ENCODE measurements at regions of chr9 and their contacts with region 1.

Region 1: GRCh38 chr9:96217754-96218693 is 84.0 kb downstream of the HSD17B3 start:
- DNase-seq: peak; percentile 59 to 82
- ATAC-seq: peak; percentile 89 to 95 (median 92)
- H3K4me3 ChIP-seq: peak overlapping the region in 9 of 10 donors; percentile 12 to 48 (median 40)
- H3K27ac ChIP-seq: peak overlapping the region in 9 of 10 donors; percentile 13 to 76 (median 37)
- H3K4me1 ChIP-seq: peaks cover 5 to 34% (median 20%) of the 10 kb centered on the region in 9 donors
- H3K27me3 ChIP-seq: peaks cover 0 to 57% (median 49%) of the 10 kb centered on the region in 7 donors
- CTCF ChIP-seq: peak; percentile 93 to 99 (median 96)

Region 2: DNA sequence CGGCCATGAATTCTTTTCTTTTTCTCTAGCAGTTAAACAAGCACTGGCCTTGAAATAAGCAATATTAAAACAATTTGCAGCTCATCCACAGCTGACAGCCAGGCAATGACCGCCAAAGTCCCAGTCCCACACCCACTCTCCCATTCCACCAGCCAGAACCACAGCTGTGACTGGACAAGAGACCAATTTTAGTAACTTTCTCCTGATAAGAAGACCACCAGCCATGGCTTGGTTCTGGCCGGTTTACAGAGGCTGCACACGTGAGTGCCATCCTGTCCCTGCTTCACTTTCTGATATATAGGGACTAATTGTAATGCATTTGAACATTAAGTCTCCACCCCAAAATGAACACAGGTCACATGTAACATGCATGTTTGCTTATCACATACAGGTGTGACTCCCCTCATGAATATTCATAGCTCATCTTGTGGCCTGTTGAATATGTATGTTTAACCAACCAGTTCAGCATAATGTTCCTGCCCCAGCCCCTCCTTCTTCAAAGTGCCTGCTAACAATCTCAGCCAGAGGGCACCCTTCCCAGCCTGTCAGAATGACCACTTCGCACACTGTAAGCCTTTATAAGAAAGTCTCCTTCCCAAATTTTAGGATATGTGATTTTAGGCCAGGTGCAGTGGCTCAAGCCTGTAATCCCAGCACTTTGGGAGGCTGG is 876.6 kb before region 1 on chr9:
- intact Hi-C with region 1: loop called in 1 of 10 experiments (anchors 5 kb)
- DNase-seq: peak in 1 of 2 donors; percentile 15
- ATAC-seq: peak in 4 of 8 donors; percentile 49 to 69 (median 68)
- H3K4me3 ChIP-seq: no peak overlapping the region
- H3K27ac ChIP-seq: no peak overlapping the region
- H3K4me1 ChIP-seq: peaks cover 0 to 12% (median 0%) of the 10 kb centered on the region in 9 donors
- H3K27me3 ChIP-seq: peaks cover 0 to 12% (median 0%) of the 10 kb centered on the region in 7 donors
- CTCF ChIP-seq: peak in 7 of 9 donors; percentile 30 to 53 (median 42)

Region 3: DNA sequence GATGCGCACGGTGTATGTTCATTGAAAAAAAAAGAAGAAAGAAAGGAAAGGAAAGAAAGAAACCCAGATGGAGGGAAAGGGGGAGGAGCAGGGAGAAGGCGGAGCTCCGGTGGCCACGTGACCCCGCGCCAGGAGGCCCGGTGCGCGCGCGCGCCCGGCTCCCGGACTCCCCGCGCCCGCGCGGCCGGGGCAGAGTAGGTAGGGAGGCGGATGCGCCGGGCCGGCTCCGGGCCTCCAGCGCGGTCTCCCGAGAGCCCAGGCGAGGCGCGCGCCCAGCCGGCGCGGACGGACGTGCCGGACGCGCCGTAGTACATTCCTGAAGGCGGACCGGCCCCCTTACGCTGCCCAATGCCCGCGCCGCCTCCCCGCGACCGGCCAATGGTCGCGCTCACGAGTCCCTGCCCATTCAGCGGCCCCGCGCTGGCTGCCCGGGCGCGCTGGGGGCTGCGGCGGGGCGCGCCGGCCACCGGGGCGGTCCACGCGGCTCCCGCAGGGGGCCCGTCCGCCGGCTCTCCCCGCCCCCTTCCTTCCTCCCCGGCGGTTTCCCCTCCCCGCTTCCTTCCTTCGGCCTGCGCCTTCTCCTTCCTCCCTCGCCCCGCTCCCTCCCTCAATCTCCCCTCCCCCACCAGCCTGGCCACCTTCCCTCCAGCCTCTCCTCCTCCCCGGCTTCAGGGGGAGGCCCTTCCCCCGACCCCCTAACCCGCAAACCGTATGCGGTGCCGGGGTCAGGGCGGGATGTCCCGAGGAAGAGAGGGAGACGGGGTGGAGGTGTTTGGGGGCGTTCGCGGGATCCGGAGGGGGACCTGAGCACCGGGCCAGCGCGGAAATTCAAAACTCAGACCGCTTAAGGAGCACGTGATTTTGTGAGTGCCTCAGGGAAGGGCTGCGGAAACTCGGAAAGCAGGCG is 707.1 kb before region 1 on chr9:
- intact Hi-C with region 1: loop called in 3 of 10 experiments (anchors 2 to 10 kb)
- DNase-seq: peak; percentile 88 to 90
- ATAC-seq: peak; percentile 73 to 90 (median 78)
- H3K4me3 ChIP-seq: peak overlapping the region; percentile 69 to 97 (median 82)
- H3K27ac ChIP-seq: peak overlapping the region; percentile 64 to 99 (median 92)
- H3K4me1 ChIP-seq: peaks cover 5 to 40% (median 24%) of the 10 kb centered on the region in 9 donors
- H3K27me3 ChIP-seq: peaks cover 0 to 89% (median 0%) of the 10 kb centered on the region in 7 donors
- CTCF ChIP-seq: no peak

Region 4: GRCh38 chr9:95736370-95736769 is 481.7 kb before region 1 on chr9:
- intact Hi-C with region 1: loop called in 2 of 10 experiments (anchors 5 to 10 kb)
- DNase-seq: no peak
- ATAC-seq: no peak
- H3K4me3 ChIP-seq: no peak overlapping the region
- H3K27ac ChIP-seq: no peak overlapping the region
- H3K4me1 ChIP-seq: peaks cover 0 to 7% (median 0%) of the 10 kb centered on the region in 9 donors
- H3K27me3 ChIP-seq: peaks cover 0 to 17% (median 0%) of the 10 kb centered on the region in 7 donors
- CTCF ChIP-seq: peak in 5 of 9 donors; percentile 8 to 35 (median 10)

Region 5: DNA sequence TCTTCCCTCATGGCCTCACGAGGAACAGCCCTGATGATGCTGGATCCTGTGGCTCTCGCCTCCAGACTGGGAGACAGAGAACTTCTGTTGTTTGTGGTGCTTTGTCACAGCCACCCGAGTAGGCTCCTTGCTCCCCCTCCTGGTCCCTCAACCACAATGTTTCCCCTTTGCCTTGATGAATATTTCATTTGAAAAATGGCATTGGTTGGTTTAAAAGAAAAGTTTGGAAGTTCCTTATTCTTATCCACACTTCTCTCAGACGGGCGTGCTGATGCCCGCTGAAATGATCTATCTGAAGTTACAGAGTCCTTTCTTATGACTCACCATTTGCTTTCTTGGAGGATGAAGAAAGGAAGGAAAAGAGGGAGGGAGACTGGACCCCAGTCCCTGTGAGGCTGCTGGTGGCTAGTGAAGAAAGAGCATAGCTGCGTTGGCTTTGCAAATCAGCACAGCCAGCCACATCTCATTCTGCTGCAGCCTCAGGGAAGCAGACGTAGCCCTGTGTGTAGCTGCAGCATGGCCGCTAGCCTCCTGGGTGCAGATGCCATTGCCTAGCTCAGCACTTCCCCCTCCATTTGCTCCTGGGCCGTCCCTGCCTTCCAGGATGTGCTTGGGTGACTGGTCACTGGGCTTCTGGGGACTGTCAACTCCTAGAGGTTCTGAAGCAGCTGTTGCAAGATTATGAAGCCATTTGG is 156.6 kb before region 1 on chr9:
- intact Hi-C with region 1: loop called in 2 of 10 experiments (anchors 5 to 10 kb)
- DNase-seq: peak in 1 of 2 donors; percentile 43
- ATAC-seq: peak in 7 of 8 donors; percentile 65 to 85 (median 77)
- H3K4me3 ChIP-seq: no peak overlapping the region
- H3K27ac ChIP-seq: peak overlapping the region in 2 of 10 donors; percentile 10 to 84
- H3K4me1 ChIP-seq: peaks cover 0 to 30% (median 0%) of the 10 kb centered on the region in 9 donors
- H3K27me3 ChIP-seq: peaks cover 0 to 4% (median 0%) of the 10 kb centered on the region in 7 donors
- CTCF ChIP-seq: peak; percentile 13 to 61 (median 49)

Region 6: GRCh38 chr9:96158909-96159575 is 59.0 kb before region 1 on chr9:
- intact Hi-C with region 1: no loop called
- DNase-seq: no peak
- ATAC-seq: peak in 3 of 8 donors; percentile 30 to 54 (median 41)
- H3K4me3 ChIP-seq: no peak overlapping the region
- H3K27ac ChIP-seq: peak overlapping the region in 2 of 10 donors; percentile 35 to 46
- H3K4me1 ChIP-seq: peaks cover 0 to 31% (median 0%) of the 10 kb centered on the region in 9 donors
- H3K27me3 ChIP-seq: peaks cover 0 to 19% (median 0%) of the 10 kb centered on the region in 7 donors
- CTCF ChIP-seq: no peak